B cell (primary cell): ENCODE measurements at regions of chr5 and their contacts with region 1.

Region 1: DNA sequence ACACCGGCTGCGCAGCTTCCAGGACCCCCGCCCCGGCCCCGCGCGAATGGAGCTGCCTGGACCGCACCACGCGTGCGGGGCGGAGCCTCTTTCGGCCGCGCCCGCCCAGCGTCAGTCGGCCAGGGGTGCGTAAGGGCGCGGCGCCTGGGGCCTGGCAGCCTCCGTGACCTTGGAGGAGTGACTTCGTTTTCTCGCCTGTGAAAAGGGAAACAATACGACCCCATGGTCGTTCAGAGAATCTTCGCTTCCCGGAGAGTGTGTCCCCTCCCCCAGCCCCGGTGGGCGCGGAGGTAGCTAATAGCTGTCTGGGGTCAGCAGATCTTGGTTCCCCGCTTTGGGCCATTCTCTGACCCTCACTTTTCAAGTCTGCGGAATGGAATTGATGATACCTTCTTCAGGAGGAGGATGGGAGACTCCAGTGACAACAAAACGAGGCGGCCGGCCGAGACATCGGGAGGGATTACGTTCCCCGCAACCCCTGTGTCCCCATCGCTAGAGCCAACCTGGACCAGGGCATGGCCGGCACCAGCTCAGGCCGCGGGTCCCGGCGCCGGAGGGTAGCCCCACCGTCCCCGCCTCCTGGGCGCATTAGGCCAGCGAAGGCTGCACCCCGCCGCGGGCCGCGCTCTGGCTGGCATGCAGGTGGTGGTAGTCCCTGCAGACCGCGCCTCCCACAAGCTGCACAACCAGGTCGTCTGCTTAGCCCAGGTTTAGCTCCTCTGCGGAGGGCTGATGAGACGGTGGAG is 5.5 kb upstream of the CDHR2 start:
- DNase-seq: peak; percentile 88
- ATAC-seq: peak; percentile 76
- H3K4me3 ChIP-seq: peak overlapping the region; percentile 64 to 79 (median 73)
- H3K4me3 Mint-ChIP-seq: peak overlapping the region; percentile 96
- H3K27ac ChIP-seq: peak overlapping the region; percentile 82 to 88
- H3K27ac Mint-ChIP-seq: peak overlapping the region; percentile 98
- H3K4me1 ChIP-seq: peaks cover 30 to 36% of the 10 kb centered on the region in 2 donors
- H3K4me1 Mint-ChIP-seq: peaks cover 47% of the 10 kb centered on the region
- H3K27me3 ChIP-seq: no peaks in the 10 kb centered on the region
- H3K27me3 Mint-ChIP-seq: no peaks in the 10 kb centered on the region
- CTCF ChIP-seq: no peak

Region 2: DNA sequence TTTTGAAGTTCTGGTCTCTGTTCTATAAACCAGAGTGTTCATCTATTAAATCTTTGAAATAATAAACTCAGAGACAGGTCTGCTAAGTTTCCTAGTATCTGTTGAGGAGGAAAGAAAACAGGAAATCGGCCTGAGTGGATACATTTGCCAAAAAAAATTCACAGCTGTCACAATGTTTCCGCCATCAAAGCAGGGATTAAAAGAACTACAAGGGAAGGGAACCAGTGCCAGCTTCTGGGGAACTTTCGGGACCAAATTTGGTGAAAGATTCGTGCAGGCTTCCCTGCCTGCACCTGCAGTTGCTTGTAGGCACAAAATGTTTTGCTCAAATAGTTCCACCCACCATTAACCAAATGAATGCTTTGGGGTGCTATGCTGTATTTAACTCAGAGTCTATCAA is 1551.8 kb before region 1 on chr5:
- CTCF ChIA-PET with region 1: no interaction called
- POLR2A ChIA-PET with region 1: no interaction called
- intact Hi-C with region 1: no loop called
- DNase-seq: no peak
- ATAC-seq: no peak
- H3K4me3 ChIP-seq: no peak overlapping the region
- H3K4me3 Mint-ChIP-seq: no peak overlapping the region
- H3K27ac ChIP-seq: no peak overlapping the region
- H3K27ac Mint-ChIP-seq: no peak overlapping the region
- H3K4me1 ChIP-seq: no peaks in the 10 kb centered on the region
- H3K4me1 Mint-ChIP-seq: no peaks in the 10 kb centered on the region
- H3K27me3 ChIP-seq: no peaks in the 10 kb centered on the region
- H3K27me3 Mint-ChIP-seq: no peaks in the 10 kb centered on the region
- CTCF ChIP-seq: no peak

Region 3: DNA sequence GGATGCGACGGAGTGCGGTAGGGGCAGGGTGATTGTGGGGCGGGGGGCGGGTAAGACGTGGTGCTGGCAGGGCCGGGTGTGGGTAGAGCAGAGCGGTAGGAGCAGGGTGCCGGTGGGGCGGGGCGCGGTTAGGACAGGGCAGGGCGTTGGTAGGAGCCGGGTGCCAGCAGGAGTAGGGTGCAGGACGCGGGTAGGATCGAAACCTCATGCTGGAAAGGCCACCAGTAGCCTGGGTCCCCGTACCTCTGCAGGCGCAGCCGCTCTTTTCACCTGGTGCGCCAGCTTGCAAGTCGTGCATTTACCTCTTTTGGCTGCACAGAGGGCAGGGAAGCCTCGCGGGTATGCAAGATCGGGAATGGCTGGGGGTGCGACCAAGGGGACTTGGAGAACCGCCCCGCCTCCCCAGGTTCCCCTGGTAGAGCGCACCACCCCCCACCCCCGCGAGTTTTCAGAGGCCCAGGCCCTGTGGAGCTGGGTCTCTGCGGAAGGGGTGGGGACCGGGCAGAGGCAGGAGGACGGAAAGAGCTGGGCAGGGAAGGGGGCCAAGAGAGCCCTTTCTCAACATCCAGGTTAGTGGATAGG is 410.2 kb before region 1 on chr5:
- CTCF ChIA-PET with region 1: no interaction called
- POLR2A ChIA-PET with region 1: no interaction called
- intact Hi-C with region 1: no loop called
- DNase-seq: no peak
- ATAC-seq: no peak
- H3K4me3 ChIP-seq: peak overlapping the region in 2 of 5 experiments; percentile 14 to 30
- H3K4me3 Mint-ChIP-seq: peak overlapping the region; percentile 29
- H3K27ac ChIP-seq: no peak overlapping the region
- H3K27ac Mint-ChIP-seq: no peak overlapping the region
- H3K4me1 ChIP-seq: peaks cover 13% of the 10 kb centered on the region in 2 donors
- H3K4me1 Mint-ChIP-seq: peaks cover 13% of the 10 kb centered on the region
- H3K27me3 ChIP-seq: peaks cover 0 to 30% (median 3%) of the 10 kb centered on the region in 4 experiments
- H3K27me3 Mint-ChIP-seq: peaks cover 43% of the 10 kb centered on the region
- CTCF ChIP-seq: no peak

Region 4: GRCh38 chr5:176388444-176389134 is 155.0 kb before region 1 on chr5 and contains the starts of genes HIGD2A and NOP16:
- CTCF ChIA-PET with region 1: interaction called, 4 read pairs
- POLR2A ChIA-PET with region 1: no interaction called
- intact Hi-C with region 1: loop called (anchors 1 kb)
- DNase-seq: peak; percentile 99
- ATAC-seq: peak; percentile 86
- H3K4me3 ChIP-seq: peak within 1 kb of the TSS; percentile 69 to 98 (median 93)
- H3K4me3 Mint-ChIP-seq: peak within 1 kb of the TSS; percentile 100
- H3K27ac ChIP-seq: peak within 1 kb of the TSS; percentile 90 to 93
- H3K27ac Mint-ChIP-seq: peak within 1 kb of the TSS; percentile 100
- H3K4me1 ChIP-seq: peaks cover 19 to 29% of the 10 kb centered on the region in 2 donors
- H3K4me1 Mint-ChIP-seq: peaks cover 26% of the 10 kb centered on the region
- H3K27me3 ChIP-seq: no peaks in the 10 kb centered on the region
- H3K27me3 Mint-ChIP-seq: no peaks in the 10 kb centered on the region
- CTCF ChIP-seq: no peak
- total RNA-seq, gene HIGD2A: 70.1 and 80.1 TPM in 2 replicates
- total RNA-seq, gene NOP16: 25.0 and 25.1 TPM in 2 replicates

Region 5: GRCh38 chr5:176405656-176406427 is 137.8 kb before region 1 on chr5:
- CTCF ChIA-PET with region 1: no interaction called
- POLR2A ChIA-PET with region 1: no interaction called
- intact Hi-C with region 1: no loop called
- DNase-seq: no peak
- ATAC-seq: no peak
- H3K4me3 ChIP-seq: no peak overlapping the region
- H3K4me3 Mint-ChIP-seq: no peak overlapping the region
- H3K27ac ChIP-seq: no peak overlapping the region
- H3K27ac Mint-ChIP-seq: no peak overlapping the region
- H3K4me1 ChIP-seq: no peaks in the 10 kb centered on the region
- H3K4me1 Mint-ChIP-seq: no peaks in the 10 kb centered on the region
- H3K27me3 ChIP-seq: no peaks in the 10 kb centered on the region
- H3K27me3 Mint-ChIP-seq: no peaks in the 10 kb centered on the region
- CTCF ChIP-seq: no peak

Region 6: GRCh38 chr5:176530983-176531821 is 12.4 kb before region 1 on chr5:
- CTCF ChIA-PET with region 1: interaction called, 28 read pairs
- POLR2A ChIA-PET with region 1: interaction called, 8 read pairs
- intact Hi-C with region 1: no loop called
- DNase-seq: no peak
- ATAC-seq: no peak
- H3K4me3 ChIP-seq: no peak overlapping the region
- H3K4me3 Mint-ChIP-seq: peak overlapping the region; percentile 50
- H3K27ac ChIP-seq: peak overlapping the region; percentile 7 to 31
- H3K27ac Mint-ChIP-seq: peak overlapping the region; percentile 76
- H3K4me1 ChIP-seq: peaks cover 62 to 68% of the 10 kb centered on the region in 2 donors
- H3K4me1 Mint-ChIP-seq: peaks cover 55% of the 10 kb centered on the region
- H3K27me3 ChIP-seq: no peaks in the 10 kb centered on the region
- H3K27me3 Mint-ChIP-seq: no peaks in the 10 kb centered on the region
- CTCF ChIP-seq: no peak

Region 7: DNA sequence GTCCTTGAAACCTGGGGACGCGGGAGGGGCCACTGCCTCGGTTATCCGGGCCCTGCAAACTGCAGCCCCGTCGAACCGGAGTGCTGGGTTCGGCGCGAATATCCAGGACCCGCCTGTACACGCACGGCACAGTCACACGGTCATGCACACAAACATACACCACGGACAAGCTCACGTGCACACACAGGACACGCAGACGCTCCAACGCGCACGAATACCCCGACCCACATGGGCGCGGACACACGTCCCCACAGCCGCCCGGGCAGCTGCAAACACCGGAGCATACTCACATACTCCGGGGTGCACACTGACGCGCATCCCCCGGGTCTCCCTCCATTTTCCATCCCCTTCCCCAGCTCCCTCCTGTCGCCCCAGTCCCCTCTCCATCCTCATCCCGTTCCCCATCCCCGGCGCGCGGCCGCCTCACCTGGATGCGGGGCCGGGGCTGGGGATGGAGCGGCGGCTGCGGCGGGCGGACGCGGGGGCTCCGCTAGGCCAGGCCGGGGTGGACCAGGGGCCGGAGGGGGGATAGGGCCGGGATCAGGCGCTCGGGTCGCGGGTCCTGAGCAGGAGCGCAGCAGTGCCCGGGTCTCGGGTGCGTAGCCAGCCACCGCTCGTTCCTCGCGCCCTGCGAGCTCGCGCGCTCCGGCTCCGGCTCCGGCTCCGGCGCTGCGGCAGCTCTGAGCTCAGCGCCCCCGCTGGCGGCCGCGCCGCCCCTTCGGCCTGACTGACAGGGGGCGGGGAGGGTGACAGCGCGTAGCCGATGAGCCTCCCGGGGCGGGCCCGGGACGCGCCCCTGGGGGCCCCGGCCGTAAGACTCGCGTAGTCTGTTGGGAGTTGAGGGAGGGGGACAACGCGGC is 86.5 kb after region 1 on chr5 and contains the starts of genes EIF4E1B and SNCB:
- CTCF ChIA-PET with region 1: no interaction called
- POLR2A ChIA-PET with region 1: no interaction called
- intact Hi-C with region 1: loop called (anchors 5 kb)
- DNase-seq: peak; percentile 80
- ATAC-seq: peak; percentile 93
- H3K4me3 ChIP-seq: peak within 1 kb of the TSS; percentile 28 to 69 (median 51)
- H3K4me3 Mint-ChIP-seq: peak within 1 kb of the TSS; percentile 86
- H3K27ac ChIP-seq: no peak within 1 kb of the TSS
- H3K27ac Mint-ChIP-seq: peak within 1 kb of the TSS; percentile 16
- H3K4me1 ChIP-seq: peaks cover 55 to 65% of the 10 kb centered on the region in 2 donors
- H3K4me1 Mint-ChIP-seq: peaks cover 61% of the 10 kb centered on the region
- H3K27me3 ChIP-seq: peaks cover 0 to 39% (median 21%) of the 10 kb centered on the region in 4 experiments
- H3K27me3 Mint-ChIP-seq: peaks cover 34% of the 10 kb centered on the region
- CTCF ChIP-seq: no peak
- total RNA-seq, gene EIF4E1B: not detected in 2 replicates
- total RNA-seq, gene SNCB: not detected in 2 replicates

Region 8: DNA sequence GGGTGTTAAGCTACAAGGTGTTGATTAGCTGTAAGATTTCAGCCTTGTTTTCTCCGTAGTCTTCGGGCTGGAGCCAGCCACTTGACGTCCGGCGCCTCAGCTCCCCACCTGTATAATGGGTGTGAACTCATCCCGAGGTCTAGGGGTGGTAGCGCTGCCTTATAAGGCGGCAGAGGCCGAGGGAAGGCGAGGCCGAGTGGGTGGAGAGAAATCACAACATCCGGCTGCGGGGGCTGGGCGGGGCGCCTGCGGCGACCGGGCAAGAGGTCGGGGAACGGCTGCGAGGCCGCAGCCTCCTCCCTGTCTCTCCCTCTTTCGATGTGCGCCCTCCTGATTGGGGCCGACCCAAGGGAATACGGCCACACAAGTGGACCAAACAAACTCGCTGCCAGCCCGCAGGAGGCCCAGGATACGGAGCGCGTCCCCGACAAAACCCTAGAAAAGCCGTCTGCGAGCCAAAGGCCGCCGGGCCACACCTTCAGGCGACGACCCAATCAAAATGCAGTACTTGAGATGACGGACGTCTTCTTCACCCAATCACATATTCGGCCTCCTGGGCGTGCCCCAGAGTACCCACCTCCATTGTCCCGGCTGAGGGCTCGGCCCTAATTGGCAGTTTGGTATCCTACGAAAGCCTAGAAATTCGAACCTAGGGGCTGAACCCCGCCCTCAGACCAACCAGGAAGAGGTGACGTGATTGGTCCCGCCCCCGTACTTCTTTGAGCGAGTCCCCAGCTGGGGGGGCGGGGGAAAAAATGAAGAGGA is 882.4 kb after region 1 on chr5:
- CTCF ChIA-PET with region 1: no interaction called
- POLR2A ChIA-PET with region 1: no interaction called
- intact Hi-C with region 1: loop called (anchors 5 kb)
- DNase-seq: peak; percentile 100
- ATAC-seq: peak; percentile 82
- H3K4me3 ChIP-seq: peak overlapping the region; percentile 28 to 74 (median 61)
- H3K4me3 Mint-ChIP-seq: peak overlapping the region; percentile 93
- H3K27ac ChIP-seq: peak overlapping the region; percentile 82 to 88
- H3K27ac Mint-ChIP-seq: peak overlapping the region; percentile 97
- H3K4me1 ChIP-seq: peaks cover 47 to 49% of the 10 kb centered on the region in 2 donors
- H3K4me1 Mint-ChIP-seq: peaks cover 49% of the 10 kb centered on the region
- H3K27me3 ChIP-seq: no peaks in the 10 kb centered on the region
- H3K27me3 Mint-ChIP-seq: no peaks in the 10 kb centered on the region
- CTCF ChIP-seq: no peak